Thyroid gland (tissue), 4 donors: ENCODE measurements at regions of chr1 and their contacts with region 1.

Region 1: GRCh38 chr1:100351095-100351891 is 1.0 kb upstream of the CDC14A start:
- DNase-seq: peak; percentile 76 to 78
- H3K4me3 ChIP-seq: peak overlapping the region; percentile 74 to 87 (median 86)
- H3K27ac ChIP-seq: peak overlapping the region; percentile 14 to 89 (median 70)
- H3K4me1 ChIP-seq: peaks cover 16 to 18% of the 10 kb centered on the region in 2 donors
- H3K27me3 ChIP-seq: no peaks in the 10 kb centered on the region
- CTCF ChIP-seq: peak in 2 of 6 experiments; percentile 26 to 27
- POLR2A ChIP-seq: peak in 1 of 2 donors; percentile 57

Region 2: DNA sequence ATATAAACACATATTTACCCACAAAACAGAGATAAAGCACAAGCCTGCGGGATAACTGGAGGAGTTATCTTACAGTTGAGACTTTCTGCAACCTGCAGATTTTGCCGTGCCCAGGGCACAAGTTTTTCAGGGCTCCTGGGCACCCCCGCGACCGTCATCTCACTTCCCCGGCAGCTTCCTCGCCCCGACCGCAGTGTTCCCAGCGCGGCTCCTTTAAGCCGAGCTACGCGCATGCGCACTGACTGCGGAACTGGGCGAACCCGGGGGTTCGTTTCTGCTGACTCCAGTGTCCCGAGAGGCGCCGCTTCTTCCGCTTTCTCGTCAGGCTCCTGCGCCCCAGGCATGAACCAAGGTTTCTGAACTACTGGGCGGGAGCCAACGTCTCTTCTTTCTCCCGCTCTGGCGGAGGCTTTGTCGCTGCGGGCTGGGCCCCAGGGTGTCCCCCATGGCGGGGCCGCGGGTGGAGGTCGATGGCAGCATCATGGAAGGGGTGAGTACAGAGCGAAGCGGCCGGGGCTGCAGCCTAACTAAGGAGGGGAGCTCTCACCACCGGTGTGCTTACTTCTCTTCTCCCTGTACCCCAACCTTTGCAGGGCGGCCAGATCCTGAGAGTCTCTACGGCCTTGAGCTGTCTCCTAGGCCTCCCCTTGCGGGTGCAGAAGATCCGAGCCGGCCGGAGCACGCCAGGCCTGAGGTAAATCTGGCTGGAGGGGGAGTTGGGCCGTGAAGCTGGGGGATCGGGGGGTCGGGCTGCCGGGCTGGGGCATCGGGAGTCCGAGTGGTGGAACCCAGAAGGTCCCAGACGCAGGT is 85.2 kb before region 1 on chr1 and contains the start of gene RTCA:
- intact Hi-C with region 1: loop called (anchors 5 kb)
- DNase-seq: peak; percentile 95 to 97
- H3K4me3 ChIP-seq: peak within 1 kb of the TSS; percentile 46 to 95 (median 88)
- H3K27ac ChIP-seq: peak within 1 kb of the TSS in 2 of 3 donors; percentile 71 to 83
- H3K4me1 ChIP-seq: peaks cover 0 to 16% of the 10 kb centered on the region in 2 donors
- H3K27me3 ChIP-seq: no peaks in the 10 kb centered on the region
- CTCF ChIP-seq: no peak
- POLR2A ChIP-seq: peak in 1 of 2 donors; percentile 78
- total RNA-seq, gene RTCA: 13.6 to 29.0 (median 21.1) TPM